Cardiac septum (tissue), 1 donor: ENCODE measurements at regions of chr9 and their contacts with region 1.

Region 1: DNA sequence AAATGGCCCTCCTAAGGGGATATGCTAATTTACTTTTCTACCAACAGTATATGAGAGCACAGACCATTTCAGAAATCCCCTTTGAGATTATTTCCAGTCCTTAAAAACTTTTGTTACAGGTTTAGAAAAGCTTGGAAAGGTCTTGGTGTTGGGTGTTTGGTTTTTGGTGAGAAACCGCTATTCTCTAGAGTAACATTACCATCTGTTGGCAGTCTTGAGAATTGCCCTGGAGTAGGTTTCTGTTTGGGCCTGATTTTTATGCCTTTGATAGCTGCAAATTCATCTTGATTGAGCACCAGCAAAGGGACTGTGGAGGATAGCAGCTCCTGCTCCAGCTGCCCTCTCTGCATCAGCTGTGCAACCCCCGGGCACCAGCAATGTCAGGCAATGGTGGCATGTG is 8.0 kb downstream of the NUDT2 start:
- DNase-seq: no peak

Region 2: DNA sequence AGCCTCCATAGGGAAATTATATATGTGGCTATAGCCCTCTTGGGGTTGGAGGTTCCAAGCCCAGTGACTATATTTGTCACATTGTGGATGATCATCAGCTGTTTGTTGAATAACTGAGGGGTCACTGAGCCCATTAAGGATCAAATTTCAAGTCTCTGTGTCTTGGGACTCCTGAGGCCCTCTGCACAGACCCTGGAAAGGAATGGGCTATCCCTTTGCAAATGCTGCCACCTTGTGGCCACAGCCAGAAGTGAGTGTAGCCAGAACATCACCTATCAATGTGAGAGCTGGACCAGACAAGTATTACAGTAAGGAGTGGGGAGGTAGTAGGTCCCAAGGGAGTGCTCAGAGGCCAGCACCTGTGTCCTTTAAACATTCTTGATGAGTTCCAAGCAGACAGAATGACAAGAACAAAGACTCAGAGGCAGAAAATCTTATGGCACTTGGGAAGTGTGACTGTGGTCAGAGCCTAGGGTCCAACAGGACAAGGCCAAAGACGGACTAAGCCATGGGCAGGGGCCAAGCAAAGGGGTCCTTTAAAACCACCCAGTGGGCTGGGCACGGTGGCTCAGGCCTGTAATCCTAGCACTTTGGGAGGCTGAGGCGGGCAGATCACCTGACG is 266.3 kb after region 1 on chr9:
- intact Hi-C with region 1: loop called (anchors 5 kb)
- DNase-seq: peak; percentile 89